ENCODE measurements at regions of chr6 and their contacts with region 1.

Region 1: GRCh38 chr6:132952031-132952867 is 137.9 kb downstream of the RPS12 start:
- DNase-seq: no peak
- ATAC-seq: no peak
- H3K4me3 ChIP-seq: no peak overlapping the region
- H3K27ac ChIP-seq: no peak overlapping the region
- H3K4me1 ChIP-seq: no peaks in the 10 kb centered on the region
- H3K27me3 ChIP-seq: peaks cover 41% of the 10 kb centered on the region
- CTCF ChIP-seq: no peak
- POLR2A ChIP-seq: no peak
- RAD21 ChIP-seq: no peak

Region 2: DNA sequence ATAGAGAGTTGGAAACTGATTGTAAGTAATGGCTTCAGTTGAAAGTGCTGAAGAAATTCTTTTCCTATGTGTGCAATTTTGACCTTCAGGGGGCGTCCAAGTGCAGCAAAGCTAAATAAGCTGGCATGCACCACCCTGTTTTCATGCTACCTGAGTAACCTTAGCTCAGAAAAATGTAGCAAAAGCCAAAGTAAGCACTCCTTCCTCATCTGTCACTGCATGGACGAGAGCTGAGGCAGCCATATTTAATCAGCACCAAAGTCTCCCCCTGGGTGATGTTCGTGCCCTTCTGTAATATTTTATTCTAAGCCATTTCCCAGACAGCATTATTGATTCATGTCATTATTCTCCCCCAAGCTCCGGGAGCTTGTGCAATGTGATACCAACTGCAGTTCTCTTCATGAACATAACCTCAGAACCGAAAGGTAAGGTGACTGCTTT is 14.8 kb before region 1 on chr6:
- CTCF ChIA-PET with region 1: interaction called, 13 read pairs
- POLR2A ChIA-PET with region 1: no interaction called
- RAD21 ChIA-PET with region 1: no interaction called
- intact Hi-C with region 1: no loop called
- DNase-seq: peak; percentile 57
- ATAC-seq: peak; percentile 91
- H3K4me3 ChIP-seq: 0 out of 4 replicates have a peak overlapping the region, but pooled peaks of 1 of the 2 experiments have one; percentile 2
- H3K27ac ChIP-seq: no peak overlapping the region
- H3K4me1 ChIP-seq: peaks cover 0 to 5% of the 10 kb centered on the region in 2 experiments; a peak in 2 of 4 replicates
- H3K27me3 ChIP-seq: peaks cover 6% of the 10 kb centered on the region; the same call in 1 of the 2 replicates
- CTCF ChIP-seq: peak; percentile 39 to 74 (median 68); a peak in 5 of 6 replicates
- POLR2A ChIP-seq: no peak
- RAD21 ChIP-seq: peak; percentile 64

Region 3: DNA sequence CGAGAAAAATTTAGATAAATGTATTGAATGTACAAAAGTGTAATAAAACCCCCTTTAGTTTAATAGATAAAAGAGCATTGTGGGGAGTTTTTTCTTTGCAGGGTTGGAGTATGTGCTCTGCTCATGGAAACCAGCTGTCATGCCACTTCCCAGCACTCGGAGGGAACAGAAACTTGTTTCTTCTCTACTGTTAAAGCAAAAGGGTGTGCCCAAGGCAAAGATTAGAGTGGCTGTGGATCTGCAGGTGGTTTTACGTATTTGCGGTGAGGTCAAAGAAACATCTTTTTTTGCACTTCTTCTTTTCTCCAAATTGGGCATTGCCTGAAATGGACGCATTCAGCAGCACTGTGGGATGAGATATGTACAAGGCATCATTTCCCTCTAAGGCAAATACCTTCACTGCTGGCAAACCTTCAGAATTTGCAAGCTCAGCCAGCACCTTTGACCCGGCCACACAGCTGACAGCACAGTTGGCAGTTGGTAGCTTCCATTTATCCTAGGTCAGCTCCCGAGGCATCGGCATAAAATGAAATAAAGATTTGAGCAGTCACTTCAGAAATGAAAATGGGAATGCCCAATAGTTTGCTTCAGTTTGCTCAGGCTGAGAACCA is 110.6 kb after region 1 on chr6:
- CTCF ChIA-PET with region 1: no interaction called
- POLR2A ChIA-PET with region 1: no interaction called
- RAD21 ChIA-PET with region 1: no interaction called
- intact Hi-C with region 1: no loop called
- DNase-seq: no peak
- ATAC-seq: no peak
- H3K4me3 ChIP-seq: no peak overlapping the region
- H3K27ac ChIP-seq: no peak overlapping the region
- H3K4me1 ChIP-seq: no peaks in the 10 kb centered on the region
- H3K27me3 ChIP-seq: no peaks in the 10 kb centered on the region
- CTCF ChIP-seq: no peak
- POLR2A ChIP-seq: no peak
- RAD21 ChIP-seq: no peak

Region 4: DNA sequence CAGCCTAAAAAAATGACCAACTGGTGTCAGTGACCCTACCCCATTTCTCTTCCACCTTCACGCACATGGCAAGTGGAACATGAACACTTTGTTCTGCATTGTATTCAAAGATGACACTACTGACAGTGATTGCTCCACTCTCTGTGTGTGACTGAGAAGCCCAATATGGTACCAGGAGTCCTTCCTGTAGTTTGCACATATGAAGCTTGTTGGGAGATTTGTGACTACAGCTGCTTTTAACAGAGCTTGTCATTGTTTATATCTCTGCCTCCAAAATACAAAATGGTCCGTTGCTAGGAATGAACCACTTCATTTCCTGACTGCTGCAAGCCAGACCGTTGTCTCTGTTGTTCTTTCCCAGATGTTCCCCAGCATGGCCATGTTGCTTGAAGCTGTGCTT is 796.4 kb after region 1 on chr6:
- CTCF ChIA-PET with region 1: no interaction called
- POLR2A ChIA-PET with region 1: no interaction called
- RAD21 ChIA-PET with region 1: no interaction called
- intact Hi-C with region 1: no loop called
- DNase-seq: no peak
- ATAC-seq: no peak
- H3K4me3 ChIP-seq: no peak overlapping the region
- H3K27ac ChIP-seq: no peak overlapping the region
- H3K4me1 ChIP-seq: peaks cover 15 to 29% of the 10 kb centered on the region in 2 experiments
- H3K27me3 ChIP-seq: no peaks in the 10 kb centered on the region
- CTCF ChIP-seq: no peak
- POLR2A ChIP-seq: no peak
- RAD21 ChIP-seq: no peak